Right ventricle myocardium inferior (tissue), 1 donor: ENCODE measurements at regions of chr5 and their contacts with region 1.

Region 1: DNA sequence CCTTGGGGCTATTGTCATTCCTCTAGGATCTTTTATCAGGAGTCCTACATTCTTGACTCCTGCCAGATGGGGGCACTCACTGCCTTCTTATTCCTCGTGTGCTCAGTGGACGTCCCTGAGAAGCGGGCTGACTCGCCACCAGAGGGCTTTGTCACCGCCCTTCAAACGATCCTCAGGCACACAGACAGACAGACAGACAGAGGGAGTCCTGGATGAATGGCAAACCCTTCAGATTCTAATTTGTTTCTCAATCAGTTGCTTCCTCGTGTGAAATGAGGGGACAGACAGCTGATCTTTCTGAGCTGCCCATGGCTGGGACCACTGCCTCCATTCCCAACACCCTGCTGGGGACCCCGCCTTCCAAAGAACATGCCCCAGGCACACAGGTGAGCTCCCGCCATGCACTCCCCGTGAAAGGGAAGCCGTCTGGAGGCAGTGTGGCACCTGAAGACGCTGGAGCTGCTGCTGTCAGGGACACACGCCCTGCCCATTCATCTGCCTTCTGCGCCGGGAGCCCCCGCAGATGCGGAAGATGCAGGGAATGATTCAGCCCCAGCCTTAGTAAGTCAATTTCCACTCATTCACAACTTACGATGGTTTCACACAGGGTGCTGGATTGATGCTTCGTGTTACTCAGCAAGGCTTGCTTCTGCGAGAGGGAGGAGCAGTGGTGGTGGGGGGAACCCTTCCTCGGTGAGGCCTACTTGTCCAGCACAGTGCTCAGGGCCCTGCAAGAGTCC is 24.9 kb upstream of the SH3PXD2B start:
- DNase-seq: peak; percentile 89
- ATAC-seq: peak; percentile 97

Region 2: GRCh38 chr5:171797543-171797942 is 681.7 kb before region 1 on chr5:
- intact Hi-C with region 1: no loop called
- DNase-seq: no peak
- ATAC-seq: no peak

Region 3: GRCh38 chr5:172429201-172429940 is 49.8 kb before region 1 on chr5:
- intact Hi-C with region 1: no loop called
- DNase-seq: no peak
- ATAC-seq: peak; percentile 80

Region 4: DNA sequence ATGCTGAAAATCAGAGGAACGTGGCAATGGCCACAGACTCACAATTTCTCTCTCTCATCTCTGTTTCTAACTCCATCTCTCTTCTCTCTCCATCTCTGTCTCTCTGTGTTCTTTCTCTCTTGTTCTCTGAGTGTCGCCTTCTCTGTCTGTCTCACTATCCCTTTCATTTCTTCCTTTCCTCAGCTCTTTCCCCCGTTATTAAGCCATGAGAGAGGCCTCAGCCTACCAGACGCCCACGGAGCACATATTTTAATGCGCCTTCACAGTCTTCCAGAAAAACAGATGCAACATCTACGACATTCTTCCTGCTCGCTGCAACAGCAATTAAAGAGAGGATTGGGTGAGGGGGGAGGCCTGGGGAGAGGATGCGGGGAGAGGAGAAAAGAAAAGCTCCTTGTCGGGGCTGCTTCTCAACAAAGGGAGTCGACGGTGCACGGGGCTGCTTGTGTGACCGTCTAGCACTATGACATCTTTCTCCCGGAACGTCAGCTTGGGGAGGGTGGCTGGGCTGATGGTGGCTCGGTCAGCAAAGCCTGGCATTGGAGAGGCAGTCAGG is 124.1 kb after region 1 on chr5:
- intact Hi-C with region 1: loop called (anchors 5 kb)
- DNase-seq: no peak
- ATAC-seq: no peak

Region 5: DNA sequence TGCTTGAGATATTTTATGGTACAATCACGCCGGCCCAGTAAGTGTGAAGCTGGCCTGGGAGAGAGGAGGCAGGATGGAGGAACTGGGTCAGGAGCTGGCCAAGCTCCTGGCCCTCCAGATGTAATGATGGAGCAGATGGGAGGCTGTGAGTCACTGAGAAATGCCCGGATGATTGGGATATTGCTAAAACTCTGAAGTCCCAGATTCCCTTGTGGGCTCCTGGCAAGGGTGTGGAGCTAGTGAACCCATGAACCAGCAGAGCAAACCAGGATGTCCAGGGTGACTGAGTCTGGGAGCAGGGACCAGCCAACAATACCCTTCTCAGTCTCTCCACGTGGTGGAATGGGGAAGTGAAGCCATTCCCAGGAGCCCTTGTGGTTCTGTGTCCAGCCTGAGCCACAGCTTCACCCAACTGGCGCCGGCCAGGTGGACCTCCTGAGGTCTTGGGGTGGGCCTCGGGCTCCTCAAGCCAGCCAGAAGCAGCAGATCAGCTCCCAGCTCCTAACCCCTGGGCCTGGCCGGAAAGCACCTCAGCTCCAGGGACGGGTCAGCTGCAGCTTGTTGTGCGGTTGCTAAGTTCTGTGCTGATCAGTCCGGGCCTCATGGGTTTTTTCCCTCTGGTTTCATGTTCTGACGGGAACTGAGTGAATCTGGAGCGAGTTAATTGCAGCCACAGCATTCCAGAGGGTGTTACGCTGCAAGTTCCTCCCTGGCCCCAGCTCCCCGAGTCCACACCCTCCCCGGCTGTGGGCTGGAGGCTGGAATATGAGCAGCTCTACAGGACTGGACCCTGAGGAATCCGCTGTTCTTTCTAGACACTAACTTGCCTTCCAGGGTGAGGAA is 254.1 kb after region 1 on chr5:
- intact Hi-C with region 1: no loop called
- DNase-seq: peak; percentile 92
- ATAC-seq: peak; percentile 94